ENCODE measurements at regions of chr16 and their contacts with region 1.

Region 1: GRCh38 chr16:27847030-27847550 is 216.4 kb downstream of the GSG1L start:
- DNase-seq: peak; percentile 20

Region 2: GRCh38 chr16:27505297-27506236 is 341.5 kb before region 1 on chr16:
- in situ Hi-C with region 1: no loop called
- DNase-seq: no peak

Region 3: DNA sequence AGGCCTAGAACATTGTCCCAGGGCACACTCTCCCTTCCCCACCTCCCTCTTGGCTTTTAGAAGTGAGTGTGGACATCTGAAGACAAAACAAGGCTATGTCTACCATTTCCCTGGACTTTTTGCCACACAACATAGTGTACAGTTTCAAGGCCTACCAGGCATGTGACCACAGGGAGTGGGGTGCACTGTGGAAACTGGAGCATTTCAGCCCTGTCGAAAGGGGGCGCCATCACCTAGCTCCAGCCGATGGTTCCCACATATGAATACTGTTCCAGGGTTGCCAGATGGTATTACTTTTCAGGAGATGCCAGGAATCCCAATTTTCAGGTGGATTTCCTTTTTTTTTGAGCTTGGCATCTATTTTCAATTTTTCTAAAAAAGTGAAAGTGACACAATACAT is 156.5 kb before region 1 on chr16:
- in situ Hi-C with region 1: no loop called
- DNase-seq: peak; percentile 28

Region 4: DNA sequence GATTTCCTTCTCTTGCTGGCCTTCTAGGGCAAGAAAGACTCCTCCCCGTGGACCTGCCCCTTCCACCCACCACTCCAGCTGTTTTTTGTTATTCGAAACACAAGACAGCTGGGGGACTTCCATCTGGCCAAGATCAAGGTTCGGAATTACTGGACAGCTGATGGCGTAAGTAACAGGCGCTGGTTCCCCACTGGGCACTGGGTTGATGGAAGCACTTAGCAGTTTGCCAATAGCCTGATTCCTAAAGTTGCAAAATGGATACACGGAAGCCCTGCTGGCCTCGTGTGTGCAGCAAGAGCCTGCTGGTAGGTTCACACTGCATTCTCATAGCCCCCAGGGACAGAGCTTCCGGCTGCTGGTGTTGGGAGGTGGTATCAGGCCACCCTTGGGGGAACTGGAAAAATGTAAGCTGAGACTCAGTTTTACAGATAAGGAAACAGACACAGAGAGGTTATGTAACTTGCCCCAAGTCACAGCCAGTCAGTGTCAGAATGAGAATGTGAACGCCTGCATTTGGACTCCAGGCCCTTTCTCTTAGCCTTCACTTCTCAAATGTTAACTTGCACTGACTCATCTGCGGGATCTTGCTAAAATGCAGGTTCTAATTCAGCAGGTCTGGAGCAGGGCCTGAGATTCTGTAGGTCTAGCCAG is 125.4 kb before region 1 on chr16:
- in situ Hi-C with region 1: loop called (anchors 25 kb)
- DNase-seq: no peak

Region 5: DNA sequence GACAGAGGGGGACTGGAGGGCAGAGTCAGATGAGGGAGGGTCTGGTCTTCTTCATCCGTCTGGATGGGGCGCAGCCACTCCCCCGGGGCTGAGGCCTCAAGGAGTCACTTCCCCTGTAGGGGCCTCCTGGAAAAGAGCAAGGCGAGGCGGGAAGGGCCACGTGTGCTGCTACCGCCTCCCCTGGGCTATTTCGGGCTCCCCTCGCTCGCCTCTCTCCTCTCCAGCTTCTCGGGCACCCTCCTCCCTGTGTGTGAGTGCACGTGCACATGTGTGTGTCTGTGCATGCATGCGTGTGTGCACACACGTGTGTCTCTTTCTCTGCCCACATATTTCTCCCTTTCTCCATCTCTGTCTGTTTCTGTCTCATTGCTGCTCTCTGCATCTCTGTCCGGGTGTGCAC is 206.4 kb after region 1 on chr16:
- in situ Hi-C with region 1: no loop called
- DNase-seq: no peak